BJ (cell line): ENCODE measurements at regions of chr17 and their contacts with region 1.

Region 1: DNA sequence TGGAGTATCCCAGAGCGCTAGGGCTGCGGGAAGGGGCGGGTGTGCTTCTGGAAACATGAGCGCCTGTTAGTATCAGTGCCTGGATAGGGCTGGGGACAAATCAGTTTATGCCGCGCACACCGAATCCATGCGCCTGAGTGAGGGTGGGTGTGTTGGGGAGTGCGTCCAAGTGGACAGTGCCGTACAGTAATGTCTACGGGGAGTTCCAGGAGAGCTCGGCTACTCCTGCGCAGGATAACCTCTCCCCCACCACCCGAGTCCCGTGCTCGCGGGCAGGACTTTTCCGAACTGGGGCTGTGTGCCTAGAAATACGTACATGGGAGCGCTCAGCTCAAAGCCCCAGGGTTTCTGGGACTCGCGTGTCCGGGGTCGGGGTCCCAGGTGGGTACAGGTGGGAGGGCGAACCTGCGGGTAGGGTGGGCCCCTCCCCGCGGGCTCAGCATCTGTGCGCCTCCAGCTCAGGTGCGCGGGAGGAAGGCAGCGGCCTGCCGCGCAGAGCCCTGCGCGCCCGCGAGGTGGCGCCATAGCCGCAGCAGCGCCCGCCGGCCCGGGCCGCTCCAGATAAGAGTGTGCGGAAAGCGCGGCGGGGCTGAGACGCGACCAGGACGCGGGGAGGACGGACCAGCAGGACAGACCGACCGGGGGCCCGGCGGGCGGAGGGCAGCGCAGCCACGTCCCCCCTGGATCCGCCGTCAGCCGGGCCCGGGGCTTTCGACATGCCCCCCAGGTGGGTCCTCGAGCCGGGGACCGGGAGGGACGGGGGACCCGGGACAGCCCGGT is at the start of gene HIC1:
- DNase-seq: no peak
- H3K4me3 ChIP-seq: peak within 1 kb of the TSS; percentile 79
- H3K27me3 ChIP-seq: no peaks in the 10 kb centered on the region
- CTCF ChIP-seq: peak; percentile 50
- polyA plus RNA-seq, gene HIC1: 14.8 and 15.1 TPM in 2 replicates

Region 2: DNA sequence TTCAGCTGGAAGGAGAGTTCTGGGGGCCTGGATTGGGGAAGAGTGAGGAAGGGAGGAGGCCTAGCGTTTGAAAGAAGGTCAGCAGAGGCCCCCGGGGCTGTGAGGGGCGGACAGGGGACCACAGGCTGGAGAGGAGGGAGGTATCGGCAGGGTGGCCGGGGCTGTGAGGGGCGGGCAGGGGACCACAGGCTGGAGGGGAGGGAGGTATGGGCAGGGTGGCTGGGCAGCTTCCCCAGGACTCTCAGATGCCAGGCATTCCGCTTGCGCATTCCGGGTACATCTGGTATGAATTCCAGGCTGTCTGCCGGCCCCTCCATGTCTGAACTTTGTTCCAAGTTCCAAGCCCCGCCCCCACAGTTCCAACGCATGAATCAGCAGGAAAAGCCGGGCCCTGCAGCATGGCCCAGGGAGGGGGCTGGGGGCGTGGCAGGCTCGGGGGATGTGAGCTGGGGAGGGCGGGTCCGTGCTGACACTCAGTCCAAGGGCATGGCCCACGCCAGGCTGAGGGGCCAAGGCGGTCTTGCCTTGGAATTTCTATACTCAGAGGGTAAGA is 340.2 kb before region 1 on chr17:
- CTCF ChIA-PET with region 1: no interaction called
- POLR2A ChIA-PET with region 1: no interaction called
- DNase-seq: peak; percentile 91
- H3K4me3 ChIP-seq: peak overlapping the region; percentile 97
- H3K27me3 ChIP-seq: no peaks in the 10 kb centered on the region
- CTCF ChIP-seq: no peak

Region 3: DNA sequence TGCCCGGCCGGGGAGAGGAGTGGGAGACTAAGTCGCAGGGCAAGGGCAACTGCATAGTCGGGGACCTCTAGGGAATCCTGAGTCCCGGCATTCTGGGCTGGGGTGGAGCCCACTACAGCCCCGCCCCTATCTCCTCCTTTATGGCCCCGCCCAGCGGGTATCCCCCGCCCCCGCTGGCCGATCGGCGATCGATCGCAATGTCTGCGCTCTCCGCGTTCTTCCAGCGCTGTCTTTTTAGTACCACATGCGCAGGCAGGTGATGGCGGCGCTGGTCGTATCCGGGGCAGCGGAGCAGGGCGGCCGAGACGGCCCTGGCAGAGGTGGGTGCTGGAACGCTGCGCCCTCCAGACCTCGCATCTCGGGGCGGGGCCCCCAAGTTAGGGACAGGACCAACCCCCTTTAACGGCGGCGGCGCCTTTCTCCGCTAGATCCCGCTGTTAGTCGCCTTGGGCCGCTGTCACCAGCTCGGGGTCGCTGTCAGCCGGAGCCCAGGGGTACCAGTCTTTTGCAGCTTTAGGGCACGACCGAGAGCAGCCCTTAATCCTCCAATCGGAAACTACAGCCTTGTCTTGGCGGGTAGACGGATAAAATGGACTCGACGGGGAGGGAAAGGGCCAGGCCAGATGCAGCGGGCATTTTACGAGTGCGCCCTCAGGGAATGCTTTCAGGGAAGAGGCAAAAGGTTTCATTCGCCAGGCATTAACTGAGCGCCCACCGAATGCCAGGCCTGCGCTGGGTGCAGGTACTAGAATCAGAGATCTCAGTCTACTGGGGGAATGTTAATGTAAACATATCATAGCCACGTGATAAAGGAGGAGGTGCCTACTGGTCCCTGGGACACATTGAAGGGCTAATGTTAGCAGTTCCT is 24.6 kb before region 1 on chr17 and contains the start of gene DPH1:
- CTCF ChIA-PET with region 1: interaction called, 17 read pairs
- POLR2A ChIA-PET with region 1: no interaction called
- DNase-seq: no peak
- H3K4me3 ChIP-seq: peak within 1 kb of the TSS; percentile 76
- H3K27me3 ChIP-seq: no peaks in the 10 kb centered on the region
- CTCF ChIP-seq: no peak
- polyA plus RNA-seq, gene DPH1: 36.1 and 54.6 TPM in 2 replicates

Region 4: DNA sequence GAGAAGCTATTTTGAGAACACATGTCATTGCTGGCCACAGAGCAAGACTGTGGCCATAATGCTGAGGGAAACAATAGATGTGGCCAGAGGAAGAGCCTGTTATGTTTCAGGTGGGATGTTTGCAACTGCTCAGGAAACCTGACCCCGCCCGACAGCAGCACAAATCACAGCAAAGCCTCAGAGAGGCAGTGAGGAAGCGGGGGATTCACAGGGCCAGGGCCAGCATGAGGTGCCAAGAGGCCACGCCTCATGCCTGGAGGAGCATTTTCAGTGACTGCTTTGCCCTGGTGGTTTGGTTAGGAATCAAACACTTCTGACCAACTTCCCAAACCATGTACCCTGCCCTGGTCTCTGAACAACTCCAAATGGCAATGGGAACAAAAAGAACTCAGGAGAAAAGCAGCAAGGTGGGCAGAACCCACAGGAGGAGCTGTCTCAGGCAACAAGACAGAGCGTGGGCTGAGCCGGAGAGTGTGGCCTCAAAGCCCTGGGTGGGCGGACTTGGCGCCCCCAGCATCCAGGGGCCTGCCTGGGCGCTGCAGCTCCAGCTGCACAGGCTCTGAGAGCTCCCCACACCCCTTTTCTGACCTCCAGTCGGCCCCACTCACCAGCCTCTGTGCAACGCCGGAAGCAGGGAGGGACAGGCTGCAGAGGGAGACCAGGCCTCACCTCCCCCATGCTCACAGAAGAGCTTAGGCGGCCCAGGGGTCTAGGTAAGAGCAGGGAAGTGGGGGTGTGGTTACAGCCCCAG is 20.8 kb after region 1 on chr17:
- CTCF ChIA-PET with region 1: interaction called, 41 read pairs
- POLR2A ChIA-PET with region 1: no interaction called
- DNase-seq: no peak
- H3K4me3 ChIP-seq: no peak overlapping the region
- H3K27me3 ChIP-seq: no peaks in the 10 kb centered on the region
- CTCF ChIP-seq: peak; percentile 17; the same call in 1 of the 2 replicates

Region 5: GRCh38 chr17:2138761-2139160 is 84.1 kb after region 1 on chr17:
- CTCF ChIA-PET with region 1: no interaction called
- POLR2A ChIA-PET with region 1: no interaction called
- DNase-seq: no peak
- H3K4me3 ChIP-seq: no peak overlapping the region
- H3K27me3 ChIP-seq: no peaks in the 10 kb centered on the region
- CTCF ChIP-seq: no peak

Region 6: GRCh38 chr17:2172077-2172851 is 117.6 kb after region 1 on chr17:
- CTCF ChIA-PET with region 1: interaction called, 17 read pairs
- POLR2A ChIA-PET with region 1: no interaction called
- DNase-seq: peak; percentile 87
- H3K4me3 ChIP-seq: no peak overlapping the region
- H3K27me3 ChIP-seq: no peaks in the 10 kb centered on the region
- CTCF ChIP-seq: no peak

Region 7: DNA sequence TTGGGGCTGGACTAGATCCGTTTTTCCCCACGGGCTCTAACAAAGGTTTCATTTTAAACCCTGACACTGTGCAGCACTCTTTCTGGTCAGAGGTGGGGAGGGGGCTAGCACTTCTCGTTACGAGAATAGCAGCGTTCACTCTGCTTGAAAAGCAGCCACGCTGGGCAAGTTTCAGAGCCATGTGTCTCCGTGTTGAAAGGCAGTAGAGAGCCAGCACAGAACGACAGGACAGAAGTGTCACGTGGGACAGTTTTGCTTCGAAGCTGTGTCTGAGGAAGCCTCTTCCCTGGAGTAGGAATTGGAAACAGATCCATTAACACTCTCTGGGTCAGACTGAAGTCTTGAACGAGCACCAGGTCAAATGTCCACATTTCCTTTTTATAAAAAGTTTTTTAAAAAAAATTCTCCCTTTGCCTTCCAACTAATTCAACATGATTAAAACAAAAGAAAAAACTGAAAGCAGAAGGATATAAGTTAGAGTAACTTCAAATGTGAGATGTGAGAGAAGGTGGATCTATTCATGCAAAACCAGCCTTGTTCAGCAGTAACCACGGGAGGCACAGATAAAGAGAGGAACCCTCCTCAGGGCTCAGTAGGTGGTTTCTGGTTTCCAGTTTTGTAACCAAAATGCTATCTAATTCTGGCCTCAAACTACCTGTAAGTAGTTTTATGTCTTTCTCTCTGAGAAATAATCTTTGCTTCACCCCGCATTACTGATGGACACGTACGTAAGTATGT is 183.9 kb after region 1 on chr17:
- CTCF ChIA-PET with region 1: interaction called, 310 read pairs
- POLR2A ChIA-PET with region 1: interaction called, 3 read pairs
- DNase-seq: no peak
- H3K4me3 ChIP-seq: no peak overlapping the region
- H3K27me3 ChIP-seq: no peaks in the 10 kb centered on the region
- CTCF ChIP-seq: no peak

Region 8: GRCh38 chr17:2303204-2304188 is 248.8 kb after region 1 on chr17 and contains the starts of genes SMG6 and SRR:
- CTCF ChIA-PET with region 1: interaction called, 18 read pairs
- POLR2A ChIA-PET with region 1: no interaction called
- DNase-seq: peak; percentile 21
- H3K4me3 ChIP-seq: peak within 1 kb of the TSS; percentile 93
- H3K27me3 ChIP-seq: no peaks in the 10 kb centered on the region
- CTCF ChIP-seq: no peak
- polyA plus RNA-seq, gene SMG6: 13.8 and 29.7 TPM in 2 replicates
- polyA plus RNA-seq, gene SRR: 17.1 and 24.0 TPM in 2 replicates